ENCODE measurements at regions of chr18 and their contacts with region 1.

Region 1: DNA sequence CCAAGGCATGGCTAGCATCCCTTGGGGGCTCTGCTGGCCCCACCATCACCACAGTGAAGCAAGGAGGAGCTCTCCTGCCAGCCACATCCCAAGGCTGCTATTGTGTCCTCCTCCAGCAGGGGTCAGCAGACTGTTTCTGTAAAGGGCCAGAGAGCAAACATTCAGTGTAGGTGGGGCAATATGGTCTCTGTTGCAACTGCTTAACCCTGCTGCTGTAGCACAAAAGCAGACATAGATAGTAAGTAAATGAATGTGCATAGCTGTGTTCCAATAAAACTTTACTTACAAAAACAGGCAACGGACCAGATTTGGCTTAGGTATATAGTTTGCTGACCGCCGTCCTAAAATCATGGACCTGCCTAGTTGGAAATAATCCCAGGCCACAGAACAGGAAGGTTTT is 36.4 kb upstream of the ZBTB7C start:
- DNase-seq: peak; percentile 89
- H3K4me3 Mint-ChIP-seq: no peak overlapping the region
- H3K27ac Mint-ChIP-seq: no peak overlapping the region
- H3K4me1 Mint-ChIP-seq: no peaks in the 10 kb centered on the region
- H3K27me3 Mint-ChIP-seq: peaks cover 71% of the 10 kb centered on the region
- CTCF ChIP-seq: peak; percentile 91

Region 2: GRCh38 chr18:48022531-48023329 is 422.8 kb before region 1 on chr18:
- CTCF ChIA-PET with region 1: no interaction called
- intact Hi-C with region 1: loop called (anchors 2 kb)
- DNase-seq: peak; percentile 55
- H3K4me3 Mint-ChIP-seq: no peak overlapping the region
- H3K27ac Mint-ChIP-seq: no peak overlapping the region
- H3K4me1 Mint-ChIP-seq: peaks cover 14% of the 10 kb centered on the region
- H3K27me3 Mint-ChIP-seq: peaks cover 58% of the 10 kb centered on the region
- CTCF ChIP-seq: peak; percentile 66

Region 3: DNA sequence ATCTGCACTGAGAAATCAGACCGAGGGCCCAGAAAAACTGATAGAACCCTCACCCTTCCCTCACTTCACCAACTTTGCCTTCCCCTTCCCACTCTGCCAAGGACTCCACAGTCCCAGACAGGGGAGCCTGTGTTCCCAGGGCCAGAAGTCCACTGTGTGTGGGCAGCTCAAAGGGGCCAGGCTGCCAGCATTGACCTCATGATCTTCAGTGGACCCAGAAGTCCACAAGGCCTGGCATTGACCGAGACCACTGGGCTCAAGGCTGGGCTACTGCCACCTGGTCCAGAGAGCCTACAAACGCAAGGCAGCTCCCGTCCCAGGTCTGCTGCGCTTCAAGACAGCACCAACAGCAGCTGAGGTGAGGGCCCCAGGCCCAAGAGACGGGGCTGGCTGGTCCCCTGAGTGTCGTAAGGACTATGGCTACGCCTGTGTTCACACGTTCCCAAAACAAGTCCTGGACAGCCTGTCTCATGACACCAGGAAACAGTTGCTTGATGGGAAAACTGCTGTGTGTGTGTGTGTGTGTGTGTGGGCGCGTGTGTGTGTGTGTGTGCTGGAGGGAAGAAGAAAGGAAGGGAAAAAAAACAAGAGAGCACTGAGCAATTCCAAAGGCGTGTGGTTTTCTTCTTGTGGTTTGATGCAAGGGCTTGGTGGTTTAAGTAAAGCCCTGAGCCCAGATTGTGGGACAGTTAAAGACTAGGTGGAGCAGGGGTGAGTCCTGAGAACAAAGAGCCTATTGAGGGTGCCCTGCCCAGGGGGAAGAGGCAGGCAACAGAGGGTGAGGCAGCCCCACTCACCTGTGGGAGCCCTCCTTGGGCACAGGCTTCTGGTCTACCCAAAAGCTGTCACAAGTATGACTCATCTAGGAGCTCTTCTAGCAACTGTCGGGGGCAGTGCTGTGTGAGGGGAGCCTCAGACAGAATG is 10.3 kb after region 1 on chr18:
- CTCF ChIA-PET with region 1: interaction called, 16 read pairs
- intact Hi-C with region 1: no loop called
- DNase-seq: peak; percentile 91
- H3K4me3 Mint-ChIP-seq: no peak overlapping the region
- H3K27ac Mint-ChIP-seq: peak overlapping the region; percentile 53
- H3K4me1 Mint-ChIP-seq: peaks cover 69% of the 10 kb centered on the region
- H3K27me3 Mint-ChIP-seq: peaks cover 5% of the 10 kb centered on the region
- CTCF ChIP-seq: no peak

Region 4: GRCh38 chr18:48460929-48461583 is 15.5 kb after region 1 on chr18:
- CTCF ChIA-PET with region 1: interaction called, 16 read pairs
- intact Hi-C with region 1: loop called (anchors 1 kb)
- DNase-seq: no peak
- H3K4me3 Mint-ChIP-seq: no peak overlapping the region
- H3K27ac Mint-ChIP-seq: no peak overlapping the region
- H3K4me1 Mint-ChIP-seq: peaks cover 42% of the 10 kb centered on the region
- H3K27me3 Mint-ChIP-seq: peaks cover 13% of the 10 kb centered on the region
- CTCF ChIP-seq: no peak

Region 5: GRCh38 chr18:48470484-48471180 is 25.1 kb after region 1 on chr18:
- CTCF ChIA-PET with region 1: interaction called, 13 read pairs
- intact Hi-C with region 1: loop called (anchors 1 kb)
- DNase-seq: no peak
- H3K4me3 Mint-ChIP-seq: no peak overlapping the region
- H3K27ac Mint-ChIP-seq: no peak overlapping the region
- H3K4me1 Mint-ChIP-seq: no peaks in the 10 kb centered on the region
- H3K27me3 Mint-ChIP-seq: peaks cover 83% of the 10 kb centered on the region
- CTCF ChIP-seq: no peak